ENCODE measurements at regions of chr1 and their contacts with region 1.

Region 1: DNA sequence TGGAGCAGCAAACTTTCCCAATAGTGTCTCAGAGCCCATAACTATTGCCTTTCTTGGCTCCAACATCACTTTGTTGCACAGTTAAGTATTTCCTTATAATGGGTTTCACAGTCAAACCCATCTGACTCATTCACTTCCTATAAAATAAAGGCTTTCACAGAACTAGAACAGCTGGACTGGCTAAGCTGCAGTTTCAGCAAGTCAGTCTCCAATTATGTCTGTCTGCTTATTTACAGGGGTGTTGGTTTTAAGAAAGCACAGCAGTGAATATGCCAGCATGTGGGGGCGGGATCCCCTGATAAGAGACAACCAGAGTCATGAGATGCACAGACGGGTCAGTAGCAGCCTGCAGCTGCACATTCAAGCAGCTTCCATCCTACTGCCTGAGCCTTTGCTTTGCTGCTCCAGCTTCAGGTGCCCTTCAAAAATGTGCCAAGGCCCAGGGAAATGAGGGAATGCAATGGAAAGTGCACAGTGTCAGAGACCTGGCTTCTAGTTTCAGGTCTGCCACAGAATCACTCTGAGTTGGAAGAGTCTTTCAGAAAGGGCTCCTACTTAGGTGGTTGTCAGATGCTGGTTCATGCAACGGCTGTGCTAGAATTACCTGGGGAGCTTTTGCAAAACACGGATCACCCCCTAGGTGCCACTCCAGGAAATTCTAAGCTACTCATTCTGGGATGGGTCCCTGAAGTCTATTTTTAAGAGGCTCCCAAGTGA is 24.8 kb downstream of the RNF19B start:
- DNase-seq: no peak
- H3K4me3 ChIP-seq: no peak overlapping the region
- CTCF ChIP-seq: no peak

Region 2: GRCh38 chr1:32992489-32993323 is 52.9 kb after region 1 on chr1:
- in situ Hi-C with region 1: no loop called
- DNase-seq: peak; percentile 94
- H3K4me3 ChIP-seq: no peak overlapping the region
- CTCF ChIP-seq: no peak

Region 3: DNA sequence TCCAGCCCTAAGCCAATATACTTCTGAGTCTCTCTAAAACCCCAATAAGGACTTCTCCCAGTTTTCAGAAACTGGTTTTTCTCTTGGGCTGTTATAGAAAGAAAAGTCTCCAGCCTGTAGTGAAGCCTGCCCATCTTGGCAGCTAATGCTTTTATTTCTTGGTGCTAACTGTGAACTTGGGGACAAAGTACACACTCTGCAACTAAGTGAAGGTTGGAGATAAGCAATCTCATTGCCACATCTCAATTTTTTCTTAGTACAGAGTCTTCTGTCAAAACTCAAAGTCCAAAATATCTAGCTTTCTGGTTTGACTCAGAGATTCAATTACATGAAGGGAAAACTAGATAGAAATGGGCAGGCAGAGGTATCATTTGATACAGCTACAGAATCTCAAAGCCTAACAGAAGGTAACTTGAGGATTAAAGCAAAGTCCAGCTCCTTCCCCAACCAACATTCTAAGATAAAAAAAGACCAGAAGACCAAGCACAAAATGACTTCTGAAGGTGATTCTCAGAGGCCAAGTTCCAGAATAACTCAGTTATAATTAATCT is 82.9 kb after region 1 on chr1:
- in situ Hi-C with region 1: loop called (anchors 5 kb)
- DNase-seq: no peak
- H3K4me3 ChIP-seq: no peak overlapping the region
- CTCF ChIP-seq: no peak